Endothelial cell of umbilical vein (primary cell): ENCODE measurements at regions of chr1 and their contacts with region 1.

Region 1: DNA sequence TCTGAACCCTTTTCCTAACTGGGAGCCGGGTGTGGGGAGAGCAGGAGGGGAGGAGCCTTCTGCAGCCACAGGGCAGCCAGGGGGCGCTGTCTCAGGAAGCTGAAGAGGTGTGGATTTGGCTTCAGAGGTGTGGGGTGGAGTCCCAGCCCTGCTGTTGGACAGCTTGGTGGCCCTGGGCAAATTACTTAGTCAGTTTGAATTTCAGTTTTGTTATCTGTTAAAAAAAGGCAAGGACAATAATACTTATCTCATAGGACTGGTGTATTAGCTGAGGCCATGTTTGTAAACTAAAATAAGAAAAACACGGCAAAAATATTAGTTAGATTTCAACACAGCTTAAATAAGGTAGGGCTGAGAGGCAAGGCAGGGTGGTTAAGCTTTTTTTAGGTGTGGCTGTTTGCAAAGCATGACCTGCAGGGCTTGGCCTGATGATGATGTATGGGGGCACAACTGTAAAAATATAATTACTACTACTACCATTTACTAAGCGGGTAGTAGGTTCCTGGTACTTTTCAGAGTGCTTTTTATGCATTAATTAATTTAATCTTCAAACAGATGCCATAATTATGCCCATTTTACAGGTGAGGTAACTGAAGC is 111.8 kb downstream of the PLXNA2 start:
- DNase-seq: peak; percentile 64
- H3K4me3 ChIP-seq: no peak overlapping the region
- H3K27ac ChIP-seq: no peak overlapping the region
- H3K4me1 ChIP-seq: peaks cover 4% of the 10 kb centered on the region
- H3K27me3 ChIP-seq: no peaks in the 10 kb centered on the region
- CTCF ChIP-seq: peak; percentile 88 to 91
- POLR2A ChIP-seq: no peak

Region 2: GRCh38 chr1:207328004-207328403 is 804.4 kb before region 1 on chr1:
- CTCF ChIA-PET with region 1: no interaction called
- POLR2A ChIA-PET with region 1: no interaction called
- dilution Hi-C with region 1: no loop called
- intact Hi-C with region 1: no loop called
- DNase-seq: peak; percentile 54
- H3K4me3 ChIP-seq: no peak overlapping the region
- H3K27ac ChIP-seq: no peak overlapping the region
- H3K4me1 ChIP-seq: peaks cover 22% of the 10 kb centered on the region
- H3K27me3 ChIP-seq: no peaks in the 10 kb centered on the region
- CTCF ChIP-seq: no peak
- POLR2A ChIP-seq: no peak

Region 3: GRCh38 chr1:208149776-208150514 is 17.6 kb after region 1 on chr1:
- CTCF ChIA-PET with region 1: interaction called, 21 read pairs
- POLR2A ChIA-PET with region 1: no interaction called
- dilution Hi-C with region 1: no loop called
- intact Hi-C with region 1: loop called (anchors 2 kb)
- DNase-seq: no peak
- H3K4me3 ChIP-seq: no peak overlapping the region
- H3K27ac ChIP-seq: no peak overlapping the region
- H3K4me1 ChIP-seq: peaks cover 15% of the 10 kb centered on the region
- H3K27me3 ChIP-seq: no peaks in the 10 kb centered on the region
- CTCF ChIP-seq: no peak
- POLR2A ChIP-seq: no peak

Region 4: DNA sequence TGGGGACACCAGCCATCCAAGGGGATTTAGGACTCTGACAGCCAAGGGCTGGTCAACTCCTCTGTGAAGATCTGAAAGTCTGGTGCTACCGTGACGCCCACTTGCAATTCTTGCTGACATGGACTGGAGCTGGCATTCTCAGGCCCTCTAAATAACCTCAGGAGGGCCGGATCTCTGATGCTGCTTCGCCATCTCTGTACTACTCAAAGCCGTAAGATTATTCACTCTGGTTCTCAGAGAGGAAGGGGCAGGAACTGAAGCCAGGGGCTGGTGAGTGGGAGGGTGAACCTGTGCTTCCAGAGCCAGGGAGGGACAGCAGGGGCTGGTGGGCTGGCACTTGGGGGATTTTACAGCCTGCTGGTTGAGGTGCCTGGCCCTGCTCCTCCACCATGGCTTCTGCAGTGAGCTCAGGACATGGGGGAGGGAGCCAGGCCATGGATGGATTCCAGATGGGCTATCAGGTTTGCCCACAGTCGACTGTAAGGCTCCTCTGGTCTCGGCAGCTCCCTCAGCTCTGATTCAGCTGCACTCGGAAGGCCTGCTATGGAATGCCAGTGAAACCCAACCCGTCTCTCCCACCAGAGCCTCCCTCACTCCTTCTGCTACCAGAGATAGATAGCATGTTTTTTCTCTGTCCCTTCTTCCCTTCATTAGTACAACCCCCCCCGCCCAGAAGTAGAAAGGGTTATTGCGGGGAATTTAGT is 27.3 kb after region 1 on chr1:
- CTCF ChIA-PET with region 1: interaction called, 10 read pairs
- POLR2A ChIA-PET with region 1: no interaction called
- dilution Hi-C with region 1: no loop called
- intact Hi-C with region 1: no loop called
- DNase-seq: peak; percentile 41
- H3K4me3 ChIP-seq: no peak overlapping the region
- H3K27ac ChIP-seq: peak overlapping the region; percentile 27
- H3K4me1 ChIP-seq: peaks cover 54% of the 10 kb centered on the region
- H3K27me3 ChIP-seq: no peaks in the 10 kb centered on the region
- CTCF ChIP-seq: no peak
- POLR2A ChIP-seq: no peak

Region 5: GRCh38 chr1:208233546-208233945 is 101.2 kb after region 1 on chr1:
- CTCF ChIA-PET with region 1: interaction called, 316 read pairs
- POLR2A ChIA-PET with region 1: interaction called, 3 read pairs
- dilution Hi-C with region 1: loop called (anchors 25 kb)
- intact Hi-C with region 1: no loop called
- DNase-seq: peak; percentile 54
- H3K4me3 ChIP-seq: no peak overlapping the region
- H3K27ac ChIP-seq: peak overlapping the region; percentile 15
- H3K4me1 ChIP-seq: peaks cover 78% of the 10 kb centered on the region
- H3K27me3 ChIP-seq: no peaks in the 10 kb centered on the region
- CTCF ChIP-seq: no peak
- POLR2A ChIP-seq: no peak